Posterior vena cava (tissue), 2 donors: ENCODE measurements at regions of chr4 and their contacts with region 1.

Region 1: GRCh38 chr4:3226467-3226866 is 22.5 kb upstream of the MSANTD1 start:
- DNase-seq: peak; percentile 79

Region 2: DNA sequence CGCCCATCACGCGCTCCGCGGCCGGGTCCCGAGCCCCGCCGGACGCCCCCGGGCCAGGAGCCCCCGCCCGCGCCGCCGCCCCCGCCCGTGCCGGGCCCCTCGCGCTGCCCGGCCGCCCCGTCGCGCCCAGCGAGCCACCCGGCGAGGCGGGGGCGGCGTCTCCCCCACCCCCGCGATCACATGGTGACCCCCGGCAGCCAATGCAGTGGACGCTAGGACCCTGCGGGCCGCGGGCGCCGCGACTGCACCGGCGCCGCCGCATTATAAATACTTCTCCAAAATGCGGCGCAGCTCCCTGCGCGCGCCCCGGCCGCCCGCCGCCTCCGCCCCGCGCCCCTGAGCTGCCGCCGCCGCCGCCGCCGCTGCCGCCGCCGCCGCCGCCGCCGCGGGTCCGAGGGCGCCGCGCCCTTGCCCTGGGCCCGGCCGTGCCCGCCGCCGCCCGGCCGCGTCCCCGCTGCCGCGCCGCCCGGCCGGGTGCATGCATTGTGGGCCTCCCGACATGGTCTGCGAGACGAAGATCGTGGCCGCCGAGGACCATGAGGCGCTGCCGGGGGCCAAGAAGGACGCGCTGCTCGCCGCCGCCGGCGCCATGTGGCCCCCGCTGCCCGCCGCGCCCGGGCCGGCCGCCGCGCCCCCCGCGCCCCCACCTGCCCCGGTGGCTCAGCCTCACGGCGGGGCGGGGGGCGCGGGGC is 1167.3 kb before region 1 on chr4 and contains the start of gene NAT8L:
- intact Hi-C with region 1: no loop called
- DNase-seq: peak; percentile 75
- total RNA-seq, gene NAT8L: 0.19 to 0.52 TPM

Region 3: DNA sequence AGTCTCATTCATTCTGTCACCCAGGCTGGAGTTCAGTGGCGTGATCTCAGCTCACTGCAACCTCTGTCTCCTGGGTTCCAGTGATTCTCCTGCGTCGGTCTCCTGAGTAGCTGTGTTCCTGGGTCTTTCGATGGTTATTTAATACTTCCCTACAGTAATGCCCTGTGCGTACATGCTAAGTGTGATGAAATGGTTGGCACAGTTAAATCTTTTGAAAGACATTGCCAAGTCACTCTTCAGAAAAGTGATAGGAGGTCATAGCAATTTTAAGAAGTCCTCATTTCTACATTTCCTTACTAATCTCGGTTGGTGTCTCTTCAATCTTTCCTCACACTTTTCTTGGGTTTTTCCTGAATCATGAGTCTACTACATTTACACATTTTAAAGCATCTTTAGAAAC is 166.5 kb before region 1 on chr4:
- intact Hi-C with region 1: loop called in 1 of 2 experiments (anchors 5 kb)
- DNase-seq: no peak